GM18951 (cell line): ENCODE measurements at regions of chr10 and their contacts with region 1.

Region 1: GRCh38 chr10:45464958-45465567 is 91.0 kb downstream of the ALOX5 start:
- POLR2A ChIP-seq: no peak

Region 2: GRCh38 chr10:45034301-45034700 is 430.8 kb before region 1 on chr10:
- in situ Hi-C with region 1: no loop called
- POLR2A ChIP-seq: no peak

Region 3: DNA sequence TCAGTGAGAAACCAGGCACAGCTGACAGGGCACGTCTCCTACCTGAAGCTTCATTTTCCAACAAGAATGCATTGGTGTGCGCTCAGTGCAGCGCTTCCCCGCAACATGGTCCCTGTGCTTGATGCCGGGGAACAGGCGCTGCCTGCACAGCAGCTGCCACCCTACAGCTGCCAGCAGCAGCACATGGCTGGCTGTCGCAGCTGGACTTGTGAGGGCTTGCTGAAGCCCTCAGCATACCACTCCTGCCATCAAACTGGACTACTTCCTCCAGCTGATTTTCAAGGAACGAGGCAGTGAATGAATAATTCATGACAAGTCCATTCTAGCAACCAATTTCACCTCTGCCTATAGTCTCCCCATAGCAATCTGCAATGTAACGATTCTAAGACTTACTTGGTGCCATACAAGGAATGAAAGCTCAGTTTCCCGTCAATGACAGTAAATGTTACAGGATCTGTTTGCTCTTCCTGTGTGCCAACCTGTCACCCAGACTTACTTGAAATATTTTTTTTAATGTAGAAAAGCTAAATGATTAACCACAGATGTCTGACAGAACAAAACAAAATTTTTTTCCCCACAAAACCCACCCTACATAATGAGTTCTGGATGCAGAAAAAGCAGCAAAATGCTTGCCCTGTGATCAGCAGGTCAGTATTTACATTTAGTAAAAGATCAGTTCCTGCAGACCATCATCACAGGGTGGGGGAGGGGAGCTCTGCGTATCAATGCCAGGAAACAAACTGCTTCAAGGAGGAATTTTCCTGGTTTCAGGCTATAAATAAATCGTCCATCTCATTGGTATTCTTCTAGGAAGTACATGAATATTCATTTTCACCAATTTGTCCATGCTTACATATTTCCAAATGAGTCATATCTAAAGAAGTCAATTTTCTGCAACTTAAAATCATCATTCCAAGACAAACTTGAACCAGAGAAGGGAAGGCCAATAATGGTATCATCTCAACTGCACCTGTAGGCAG is 49.5 kb after region 1 on chr10:
- in situ Hi-C with region 1: no loop called
- POLR2A ChIP-seq: no peak

Region 4: GRCh38 chr10:45672181-45673073 is 207.4 kb after region 1 on chr10 and contains the start of gene ZFAND4:
- in situ Hi-C with region 1: loop called (anchors 10 kb)
- POLR2A ChIP-seq: peak; percentile 75